Sciatic nerve (tissue), 2 donors: ENCODE measurements at regions of chr4 and their contacts with region 1.

Region 1: GRCh38 chr4:125650557-125650956 is 335.8 kb downstream of the FAT4 start:
- DNase-seq: no peak
- ATAC-seq: no peak

Region 2: GRCh38 chr4:125573786-125574185 is 76.8 kb before region 1 on chr4:
- intact Hi-C with region 1: loop called (anchors 2 kb)
- DNase-seq: no peak
- ATAC-seq: no peak

Region 3: DNA sequence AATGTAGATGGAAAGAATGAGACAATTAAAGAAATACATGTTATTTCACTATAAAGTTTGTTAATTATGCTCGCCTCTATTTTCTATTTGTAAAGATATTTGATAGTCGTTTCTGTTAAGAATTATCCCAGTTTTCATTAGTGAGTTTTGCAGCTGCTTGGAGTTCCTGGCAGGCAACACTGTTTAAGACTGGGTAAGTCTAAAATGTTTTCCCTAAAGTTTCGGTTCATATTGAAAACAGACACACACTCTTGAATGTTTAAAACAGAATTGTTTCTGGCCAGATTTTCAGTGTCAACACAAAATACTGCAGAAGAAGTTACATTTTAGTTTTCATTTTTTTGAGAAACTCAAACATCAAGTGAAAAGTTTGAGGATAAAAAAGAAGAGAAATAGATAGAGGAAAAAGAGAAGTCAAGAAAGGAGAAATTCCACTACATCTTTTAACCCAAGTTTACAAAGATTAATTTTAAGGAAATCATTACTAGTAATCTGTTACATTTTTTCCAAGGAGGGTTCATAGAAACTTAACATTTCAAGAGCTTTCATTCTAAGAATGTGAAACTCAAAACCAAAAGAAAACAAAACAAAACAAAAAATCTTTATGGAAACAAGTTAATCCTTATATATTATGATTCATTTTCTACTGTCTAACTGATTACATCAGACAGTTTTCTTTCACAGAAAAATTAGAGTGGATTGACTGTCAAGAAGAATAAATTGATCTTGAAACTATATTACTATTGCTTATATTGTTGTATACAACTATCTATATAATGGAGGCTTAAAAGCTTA is 30.3 kb before region 1 on chr4:
- intact Hi-C with region 1: no loop called
- DNase-seq: no peak
- ATAC-seq: no peak

Region 4: GRCh38 chr4:126081336-126081735 is 430.8 kb after region 1 on chr4:
- intact Hi-C with region 1: no loop called
- DNase-seq: no peak
- ATAC-seq: peak; percentile 24